Activated CD8-positive, alpha-beta T cell treated with anti-CD3 and anti-CD28 coated beads for 36 hours (primary cell): ENCODE measurements at regions of chr6 and their contacts with region 1.

Region 1: GRCh38 chr6:42166444-42167141 is 6.6 kb upstream of the GUCA1A start:
- DNase-seq: peak; percentile 89
- ATAC-seq: peak; percentile 98
- H3K4me3 Mint-ChIP-seq: no peak overlapping the region
- H3K27ac Mint-ChIP-seq: no peak overlapping the region
- H3K4me1 Mint-ChIP-seq: no peaks in the 10 kb centered on the region
- H3K27me3 Mint-ChIP-seq: no peaks in the 10 kb centered on the region
- CTCF ChIP-seq: peak; percentile 94

Region 2: DNA sequence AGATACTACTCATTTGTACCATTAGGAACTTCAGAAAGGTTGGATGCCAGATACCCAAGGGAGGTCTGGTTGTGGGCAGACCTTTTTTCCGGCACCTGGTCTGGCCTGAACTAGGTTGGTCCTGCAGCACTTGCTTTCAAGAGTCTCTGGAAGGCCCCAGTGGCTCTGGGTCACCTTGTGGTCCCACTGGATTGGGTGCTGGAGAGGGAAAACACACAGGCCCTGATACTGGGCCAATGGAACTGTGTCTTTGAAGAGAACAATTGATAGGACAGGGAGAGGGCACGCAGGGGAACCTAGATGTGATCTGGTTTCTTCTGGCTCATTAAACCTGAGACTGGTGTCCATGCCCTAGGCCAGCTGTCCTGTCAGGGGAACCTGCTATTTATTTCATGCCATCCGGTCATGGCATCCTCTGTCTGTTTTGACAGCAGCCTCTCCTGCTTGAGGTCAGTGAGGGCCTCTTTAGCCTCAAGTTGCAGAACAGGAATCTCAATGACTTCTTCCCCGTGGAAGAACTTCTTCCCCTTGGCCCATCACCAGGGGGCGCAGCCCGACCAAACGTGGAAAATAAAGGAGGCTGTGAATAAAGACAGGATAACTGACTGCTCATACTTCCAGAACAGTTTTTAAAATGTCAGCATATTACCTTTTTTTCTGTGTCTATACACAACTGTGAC is 91.3 kb before region 1 on chr6:
- CTCF ChIA-PET with region 1: interaction called, 5 read pairs
- POLR2A ChIA-PET with region 1: no interaction called
- intact Hi-C with region 1: loop called (anchors 1 kb)
- DNase-seq: peak; percentile 73
- ATAC-seq: no peak
- H3K4me3 Mint-ChIP-seq: no peak overlapping the region
- H3K27ac Mint-ChIP-seq: no peak overlapping the region
- H3K4me1 Mint-ChIP-seq: no peaks in the 10 kb centered on the region
- H3K27me3 Mint-ChIP-seq: no peaks in the 10 kb centered on the region
- CTCF ChIP-seq: peak; percentile 73